A673 (cell line): ENCODE measurements at regions of chr9 and their contacts with region 1.

Region 1: DNA sequence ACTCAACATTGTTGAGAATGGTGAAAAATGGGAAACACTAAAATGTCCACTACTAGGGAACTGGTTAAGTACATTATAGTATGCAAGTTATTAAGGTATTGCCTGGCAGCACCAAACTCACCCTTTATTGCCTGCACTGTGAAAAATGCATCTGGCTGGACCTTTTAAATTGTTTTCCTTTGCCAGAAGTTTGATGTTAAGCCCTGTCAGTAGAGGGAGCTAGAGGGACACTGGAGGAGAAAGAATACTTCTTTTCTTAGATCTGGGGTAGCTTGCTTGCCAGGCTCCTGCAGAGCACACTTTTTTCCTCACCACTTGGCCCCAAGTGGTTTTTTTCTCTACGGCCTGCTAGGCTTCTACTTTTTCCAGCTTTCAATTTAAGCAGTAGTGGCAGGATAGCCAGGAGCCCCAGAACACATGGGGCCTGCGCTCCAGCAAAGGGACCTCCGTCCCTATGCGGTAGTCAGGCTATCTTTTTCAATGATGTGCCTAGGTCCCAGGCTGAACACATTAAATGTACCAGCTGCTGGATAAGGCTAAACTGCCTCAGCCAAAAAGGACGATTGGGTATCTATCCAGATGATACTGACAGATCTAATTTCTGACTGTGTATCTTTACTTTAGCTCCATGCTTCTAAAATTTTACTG is 8.0 kb upstream of the HABP4 start:
- DNase-seq: peak; percentile 62
- H3K4me3 ChIP-seq: no peak overlapping the region
- H3K27ac ChIP-seq: no peak overlapping the region
- H3K4me1 ChIP-seq: no peaks in the 10 kb centered on the region
- H3K27me3 ChIP-seq: no peaks in the 10 kb centered on the region
- CTCF ChIP-seq: peak; percentile 49

Region 2: DNA sequence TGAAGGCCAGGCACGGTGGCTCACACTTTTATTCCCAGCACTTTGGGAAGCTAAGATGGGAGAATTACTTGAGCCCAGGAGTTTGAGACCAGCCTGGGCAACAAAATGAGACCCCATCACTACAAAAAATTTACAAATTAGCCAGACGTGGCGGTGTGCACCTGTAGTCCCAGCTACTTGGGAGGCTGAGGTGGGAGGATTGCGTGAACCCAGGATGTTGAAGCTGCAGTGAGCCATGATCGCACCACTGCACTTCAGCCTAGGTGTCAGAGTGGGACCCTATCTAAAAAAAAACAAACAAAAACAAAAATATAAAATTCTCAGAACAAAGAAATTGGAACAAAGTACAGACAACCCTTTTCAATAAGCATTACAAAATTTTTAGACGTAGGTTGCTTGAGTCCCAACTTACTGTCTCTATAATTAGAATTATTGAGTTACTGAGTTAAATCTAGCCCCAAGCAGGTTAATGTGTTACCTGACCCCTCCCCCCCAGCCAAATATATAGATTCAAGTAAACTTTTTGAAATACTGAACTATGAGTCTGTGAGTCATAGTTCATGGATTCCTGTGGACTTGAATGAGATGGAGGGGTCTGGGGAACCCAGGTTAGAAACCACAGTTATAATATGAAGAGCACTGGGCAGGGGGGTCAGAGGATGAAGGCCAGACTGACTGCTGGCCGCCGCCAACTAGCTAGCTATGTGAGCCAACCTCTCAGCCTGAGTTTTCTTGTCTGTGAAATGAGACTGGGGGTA is 1542.3 kb before region 1 on chr9:
- CTCF ChIA-PET with region 1: no interaction called
- POLR2A ChIA-PET with region 1: interaction called, 12 read pairs
- intact Hi-C with region 1: no loop called
- DNase-seq: no peak
- H3K4me3 ChIP-seq: no peak overlapping the region
- H3K27ac ChIP-seq: no peak overlapping the region
- H3K4me1 ChIP-seq: peaks cover 4% of the 10 kb centered on the region
- H3K27me3 ChIP-seq: no peaks in the 10 kb centered on the region
- CTCF ChIP-seq: no peak

Region 3: DNA sequence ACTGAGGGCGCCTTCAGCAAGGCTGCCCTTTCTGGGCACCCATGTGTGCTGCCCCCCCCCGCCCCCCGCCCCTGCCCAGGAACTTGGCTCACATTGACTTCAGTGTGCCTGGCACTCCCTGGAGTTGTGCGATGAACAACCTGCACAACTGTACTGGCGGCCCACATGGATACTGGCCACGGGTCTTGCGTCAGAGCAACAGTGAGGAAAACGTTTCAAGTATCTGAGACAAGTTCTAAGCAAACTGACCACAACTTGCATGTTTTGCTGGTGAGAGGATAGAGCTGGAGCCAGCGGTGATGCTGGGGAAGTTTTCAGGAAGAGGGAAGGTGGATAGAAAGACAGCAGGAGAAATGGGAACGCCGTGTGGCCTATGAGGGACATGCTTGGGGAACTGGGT is 53.4 kb after region 1 on chr9:
- CTCF ChIA-PET with region 1: no interaction called
- POLR2A ChIA-PET with region 1: no interaction called
- intact Hi-C with region 1: no loop called
- DNase-seq: no peak
- H3K4me3 ChIP-seq: no peak overlapping the region
- H3K27ac ChIP-seq: no peak overlapping the region
- H3K4me1 ChIP-seq: no peaks in the 10 kb centered on the region
- H3K27me3 ChIP-seq: no peaks in the 10 kb centered on the region
- CTCF ChIP-seq: no peak